ENCODE measurements at regions of chr5 and their contacts with region 1.

Region 1: GRCh38 chr5:81851481-81852178 is 100.7 kb upstream of the SSBP2 start:
- DNase-seq: peak; percentile 81 to 95 (median 90)
- ATAC-seq: peak; percentile 86
- H3K4me3 ChIP-seq: peak overlapping the region; percentile 65
- H3K4me3 Mint-ChIP-seq: peak overlapping the region; percentile 97
- H3K27ac ChIP-seq: peak overlapping the region; percentile 51 to 66
- H3K27ac Mint-ChIP-seq: peak overlapping the region; percentile 96
- H3K4me1 ChIP-seq: peaks cover 32% of the 10 kb centered on the region
- H3K4me1 Mint-ChIP-seq: peaks cover 56% of the 10 kb centered on the region
- H3K27me3 ChIP-seq: no peaks in the 10 kb centered on the region
- H3K27me3 Mint-ChIP-seq: no peaks in the 10 kb centered on the region
- CTCF ChIP-seq: no peak

Region 2: DNA sequence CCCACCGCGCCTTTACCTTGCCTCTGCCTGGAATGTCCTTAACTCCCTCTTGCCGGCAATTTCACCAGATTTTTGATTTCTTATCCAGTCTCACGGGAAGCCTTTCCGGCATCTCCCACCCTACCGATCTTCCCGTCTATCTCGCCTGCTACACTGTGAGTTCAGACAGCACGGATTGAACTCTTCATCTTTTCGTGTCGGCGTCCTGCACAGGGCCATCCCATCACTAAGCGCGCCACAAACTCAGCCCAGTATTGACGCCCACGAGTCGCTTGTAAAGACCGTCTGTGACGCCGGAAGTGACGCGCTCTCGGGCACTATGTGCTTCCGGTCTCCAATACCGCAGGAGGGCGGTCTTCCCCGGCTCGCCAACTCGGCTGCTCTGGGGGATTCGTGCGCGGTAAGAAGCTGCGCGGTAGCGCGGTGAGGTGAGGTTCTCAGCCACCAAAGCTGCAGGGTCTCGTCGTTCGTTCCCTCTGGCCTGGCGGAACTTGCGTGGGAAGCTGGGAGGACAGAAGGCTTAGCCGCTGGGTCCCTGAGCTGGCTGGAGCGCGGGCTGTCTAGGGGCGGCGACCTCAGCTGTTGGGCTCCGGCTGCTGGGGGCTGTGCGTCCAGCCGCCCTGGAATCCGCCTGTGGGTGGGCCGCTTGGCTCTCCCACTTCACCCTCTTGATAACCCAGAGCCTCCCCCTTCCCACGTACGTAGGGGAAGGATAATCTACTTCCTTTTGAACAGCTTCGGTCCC is 550.2 kb before region 1 on chr5 and contains the start of gene ZCCHC9:
- CTCF ChIA-PET with region 1: no interaction called
- POLR2A ChIA-PET with region 1: interaction called, 3 read pairs
- intact Hi-C with region 1: loop called in 1 of 2 experiments (anchors 10 kb)
- DNase-seq: peak; percentile 87 to 98 (median 90)
- ATAC-seq: peak; percentile 91
- H3K4me3 ChIP-seq: peak within 1 kb of the TSS; percentile 92
- H3K4me3 Mint-ChIP-seq: peak within 1 kb of the TSS; percentile 94
- H3K27ac ChIP-seq: peak within 1 kb of the TSS; percentile 84
- H3K27ac Mint-ChIP-seq: peak within 1 kb of the TSS; percentile 91
- H3K4me1 ChIP-seq: peaks cover 25% of the 10 kb centered on the region
- H3K4me1 Mint-ChIP-seq: peaks cover 60% of the 10 kb centered on the region
- H3K27me3 ChIP-seq: no peaks in the 10 kb centered on the region
- H3K27me3 Mint-ChIP-seq: no peaks in the 10 kb centered on the region
- CTCF ChIP-seq: no peak
- total RNA-seq, gene ZCCHC9: 16.3 to 17.3 TPM

Region 3: GRCh38 chr5:81533629-81534405 is 317.8 kb before region 1 on chr5:
- CTCF ChIA-PET with region 1: no interaction called
- POLR2A ChIA-PET with region 1: interaction called, 10 read pairs
- intact Hi-C with region 1: loop called in 1 of 2 experiments (anchors 5 kb)
- DNase-seq: no peak
- ATAC-seq: no peak
- H3K4me3 ChIP-seq: no peak overlapping the region
- H3K4me3 Mint-ChIP-seq: peak overlapping the region; percentile 18
- H3K27ac ChIP-seq: no peak overlapping the region
- H3K27ac Mint-ChIP-seq: peak overlapping the region; percentile 53
- H3K4me1 ChIP-seq: peaks cover 18% of the 10 kb centered on the region
- H3K4me1 Mint-ChIP-seq: peaks cover 78% of the 10 kb centered on the region
- H3K27me3 ChIP-seq: no peaks in the 10 kb centered on the region
- H3K27me3 Mint-ChIP-seq: no peaks in the 10 kb centered on the region
- CTCF ChIP-seq: no peak

Region 4: DNA sequence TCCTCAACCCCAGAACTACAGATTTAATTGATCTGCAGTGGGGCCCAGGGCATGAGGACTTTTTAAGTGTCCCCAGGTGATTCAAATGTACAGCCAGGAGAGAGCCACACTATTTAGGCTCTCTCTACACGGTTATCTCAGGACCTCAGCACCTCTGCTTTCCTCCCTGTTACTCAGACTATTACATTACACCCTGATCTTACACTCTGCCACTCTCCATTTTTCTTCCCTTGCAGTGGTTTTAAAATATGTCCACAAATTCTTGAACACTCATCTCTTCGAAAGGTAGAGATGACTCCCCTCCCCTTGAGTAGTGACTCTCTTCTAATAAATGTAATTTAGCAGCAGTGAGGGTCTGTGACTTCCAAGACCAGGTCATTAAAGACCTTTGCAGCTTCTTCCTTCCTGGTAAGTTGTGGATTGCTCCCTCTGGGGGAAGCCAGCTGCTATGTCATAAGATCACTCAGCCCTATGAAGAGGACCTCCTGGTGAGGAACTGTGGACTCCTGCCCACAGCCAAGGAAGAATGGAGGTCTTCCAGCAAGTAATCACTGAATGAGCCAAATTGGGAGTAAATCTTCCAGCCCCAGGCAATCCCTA is 13.2 kb before region 1 on chr5:
- CTCF ChIA-PET with region 1: interaction called, 16 read pairs
- POLR2A ChIA-PET with region 1: interaction called, 15 read pairs
- intact Hi-C with region 1: no loop called
- DNase-seq: peak in 8 of 14 experiments; percentile 15 to 71 (median 40)
- ATAC-seq: peak; percentile 94
- H3K4me3 ChIP-seq: no peak overlapping the region
- H3K4me3 Mint-ChIP-seq: no peak overlapping the region
- H3K27ac ChIP-seq: no peak overlapping the region
- H3K27ac Mint-ChIP-seq: no peak overlapping the region
- H3K4me1 ChIP-seq: peaks cover 8% of the 10 kb centered on the region
- H3K4me1 Mint-ChIP-seq: peaks cover 9% of the 10 kb centered on the region
- H3K27me3 ChIP-seq: no peaks in the 10 kb centered on the region
- H3K27me3 Mint-ChIP-seq: no peaks in the 10 kb centered on the region
- CTCF ChIP-seq: peak; percentile 76

Region 5: GRCh38 chr5:82165740-82166530 is 314.3 kb after region 1 on chr5:
- CTCF ChIA-PET with region 1: no interaction called
- POLR2A ChIA-PET with region 1: interaction called, 3 read pairs
- intact Hi-C with region 1: loop called in 1 of 2 experiments (anchors 5 kb)
- DNase-seq: peak in 11 of 14 experiments; percentile 2 to 78 (median 29)
- ATAC-seq: peak; percentile 100
- H3K4me3 ChIP-seq: no peak overlapping the region
- H3K4me3 Mint-ChIP-seq: no peak overlapping the region
- H3K27ac ChIP-seq: no peak overlapping the region
- H3K27ac Mint-ChIP-seq: peak overlapping the region; percentile 43
- H3K4me1 ChIP-seq: no peaks in the 10 kb centered on the region
- H3K4me1 Mint-ChIP-seq: peaks cover 12% of the 10 kb centered on the region
- H3K27me3 ChIP-seq: no peaks in the 10 kb centered on the region
- H3K27me3 Mint-ChIP-seq: no peaks in the 10 kb centered on the region
- CTCF ChIP-seq: peak; percentile 79